Right cardiac atrium (tissue), 5 donors: ENCODE measurements at regions of chr20 and their contacts with region 1.

Region 1: DNA sequence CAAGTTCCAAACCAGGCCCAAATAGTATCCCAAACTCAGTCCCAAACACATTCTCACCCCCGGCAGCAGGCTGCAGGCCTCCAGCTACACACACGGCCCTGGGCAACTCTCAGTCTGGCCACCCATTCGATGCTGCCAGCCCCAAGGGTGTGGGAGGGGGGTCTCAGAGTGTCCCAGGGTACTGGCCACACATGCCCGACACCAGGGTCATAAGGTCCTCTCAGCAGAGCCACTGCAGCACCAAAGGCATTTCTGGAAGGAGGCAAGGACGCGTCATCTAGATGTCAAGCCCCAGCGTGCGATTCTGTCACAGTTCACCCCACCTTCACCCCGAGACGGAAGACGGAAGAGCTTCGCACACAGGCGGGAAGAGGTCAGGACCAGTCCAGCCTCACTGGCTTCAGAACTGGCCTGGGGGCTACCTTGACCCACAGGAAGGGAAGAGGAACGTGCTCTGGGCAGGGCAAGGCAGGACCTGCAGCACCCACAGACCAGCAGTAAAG is 9.5 kb downstream of the MYL9 start:
- DNase-seq: peak in 2 of 3 donors; percentile 57 to 69
- ATAC-seq: peak; percentile 51 to 61
- H3K4me3 ChIP-seq: no peak overlapping the region
- H3K27ac ChIP-seq: peak overlapping the region; percentile 31
- H3K4me1 ChIP-seq: no peaks in the 10 kb centered on the region
- H3K27me3 ChIP-seq: no peaks in the 10 kb centered on the region

Region 2: DNA sequence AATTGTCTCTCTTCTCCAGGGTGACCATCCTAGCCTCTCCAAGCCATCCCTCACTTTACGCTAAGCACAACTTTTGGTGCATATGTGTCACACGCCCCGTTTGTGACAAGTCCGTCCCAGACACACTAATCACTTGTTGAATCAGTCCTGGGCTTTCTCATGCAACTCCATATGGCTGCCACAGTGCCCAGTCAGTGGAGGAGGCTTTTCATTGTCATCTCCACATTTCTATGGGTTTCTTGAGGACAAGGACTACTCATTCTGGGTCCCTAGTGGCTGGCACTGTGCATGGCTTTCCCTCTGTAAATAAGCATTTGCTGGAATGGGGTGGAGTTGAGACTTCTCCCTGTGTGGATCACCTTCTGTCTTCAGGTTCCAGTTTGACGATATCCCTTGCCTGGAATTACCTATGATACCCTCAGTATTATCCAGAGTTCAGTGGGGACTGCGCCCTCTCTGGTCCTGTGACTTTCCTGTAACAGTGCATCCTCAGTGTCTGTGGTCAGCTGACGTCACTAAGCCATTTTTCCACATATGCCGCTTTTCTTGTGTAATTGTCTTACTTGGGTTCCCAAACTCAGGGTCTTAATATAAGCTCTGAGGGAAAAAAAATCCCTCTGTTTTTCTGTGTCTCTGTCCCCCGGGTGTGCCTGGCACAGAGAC is 69.3 kb before region 1 on chr20:
- intact Hi-C with region 1: no loop called
- DNase-seq: peak in 2 of 3 donors; percentile 7 to 20
- ATAC-seq: no peak
- H3K4me3 ChIP-seq: no peak overlapping the region
- H3K27ac ChIP-seq: peak overlapping the region; percentile 54
- H3K4me1 ChIP-seq: peaks cover 59% of the 10 kb centered on the region
- H3K27me3 ChIP-seq: no peaks in the 10 kb centered on the region

Region 3: GRCh38 chr20:36591854-36592641 is 41.2 kb after region 1 on chr20:
- intact Hi-C with region 1: loop called in 3 of 4 experiments (anchors 5 kb)
- DNase-seq: peak in 1 of 3 donors; percentile 61
- ATAC-seq: peak; percentile 46 to 48
- H3K4me3 ChIP-seq: no peak overlapping the region
- H3K27ac ChIP-seq: no peak overlapping the region
- H3K4me1 ChIP-seq: no peaks in the 10 kb centered on the region
- H3K27me3 ChIP-seq: no peaks in the 10 kb centered on the region

Region 4: DNA sequence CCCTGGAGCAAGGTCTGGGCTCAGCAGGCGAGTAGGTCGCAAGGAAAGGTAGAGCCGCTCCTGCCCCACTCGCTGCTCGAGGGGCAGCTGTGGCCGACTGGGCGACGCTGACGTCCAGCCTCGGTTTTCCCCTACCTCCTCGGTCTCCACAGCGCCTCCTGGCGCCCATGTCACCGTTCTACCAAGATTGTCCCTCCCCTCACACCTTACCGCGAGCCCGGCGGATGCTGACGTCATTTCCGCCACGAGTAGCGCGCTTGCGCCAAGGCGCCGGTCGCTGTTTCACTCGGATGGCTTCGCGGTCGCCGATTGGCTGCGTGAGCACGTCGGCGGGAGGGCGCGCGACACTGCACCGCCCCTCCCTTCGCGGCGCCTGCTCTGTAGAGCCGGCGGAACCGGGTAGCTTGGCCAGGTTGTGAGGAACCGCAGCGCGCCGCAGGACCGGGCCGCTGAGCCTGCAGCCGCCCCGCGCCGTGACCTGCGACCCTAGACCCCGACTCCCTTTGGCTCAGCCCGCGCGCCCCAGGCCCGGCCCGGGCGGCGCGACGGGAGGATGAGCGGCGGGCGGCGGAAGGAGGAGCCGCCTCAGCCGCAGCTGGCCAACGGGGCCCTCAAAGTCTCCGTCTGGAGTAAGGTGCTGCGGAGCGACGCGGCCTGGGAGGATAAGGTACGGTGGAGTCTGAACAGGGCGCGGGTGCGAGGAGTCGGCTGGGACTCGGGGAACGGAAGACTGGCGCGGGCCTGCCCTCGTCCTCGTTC is 54.7 kb after region 1 on chr20 and contains the start of gene RAB5IF:
- intact Hi-C with region 1: loop called in 1 of 4 experiments (anchors 2 kb)
- DNase-seq: peak; percentile 99 to 100 (median 100)
- ATAC-seq: peak; percentile 96 to 97
- H3K4me3 ChIP-seq: peak within 1 kb of the TSS; percentile 78
- H3K27ac ChIP-seq: peak within 1 kb of the TSS; percentile 89
- H3K4me1 ChIP-seq: peaks cover 2% of the 10 kb centered on the region
- H3K27me3 ChIP-seq: no peaks in the 10 kb centered on the region
- total RNA-seq, gene RAB5IF: 60.2 to 69.9 (median 62.9) TPM